CD4-positive, alpha-beta T cell (primary cell): ENCODE measurements at regions of chr6 and their contacts with region 1.

Region 1: DNA sequence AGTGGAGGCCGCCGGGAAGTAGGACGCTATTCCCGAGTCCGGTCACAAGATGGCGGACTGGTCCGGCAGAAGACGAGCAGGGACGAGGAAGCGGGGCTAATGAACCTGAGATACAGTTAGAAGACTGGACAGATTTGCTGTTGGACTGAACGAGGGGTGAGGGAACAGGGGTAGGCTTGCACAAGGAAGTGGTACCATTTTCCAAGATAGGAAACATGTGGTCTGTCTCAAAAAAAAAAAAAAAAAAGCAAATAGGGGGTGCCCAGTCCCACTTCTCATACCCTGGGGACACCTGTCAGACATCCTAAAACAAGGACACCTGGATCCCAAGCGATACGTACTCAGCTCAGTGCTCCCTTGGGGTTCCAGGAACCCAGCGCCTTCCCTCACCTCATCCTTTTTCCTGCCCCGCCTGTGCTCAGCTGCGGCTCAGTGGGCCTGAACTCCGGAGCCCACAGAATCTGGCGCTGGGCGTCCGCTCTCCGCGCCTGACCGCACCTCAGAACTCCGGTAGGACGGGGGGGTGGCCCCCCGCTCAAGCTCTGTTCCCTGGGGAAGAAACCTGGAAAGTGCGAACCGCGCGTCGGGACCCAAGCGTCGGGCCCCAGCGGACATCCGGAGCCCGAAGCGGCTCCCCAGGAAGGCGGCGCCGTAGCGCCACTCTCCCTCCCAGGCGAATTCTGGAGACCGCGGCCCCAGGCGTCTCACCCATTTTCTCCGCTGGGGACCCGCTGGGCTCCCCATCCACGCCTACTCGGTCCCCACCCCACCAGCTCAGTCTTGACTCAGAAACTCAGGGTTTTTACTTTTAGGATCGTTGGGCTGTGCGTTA is at the start of gene LY6G5C:
- DNase-seq: peak in 13 of 14 experiments; percentile 45 to 83 (median 61)
- ATAC-seq: peak; percentile 71
- H3K4me3 ChIP-seq: peak within 1 kb of the TSS; percentile 79
- H3K4me3 Mint-ChIP-seq: peak within 1 kb of the TSS; percentile 87
- H3K27ac ChIP-seq: peak within 1 kb of the TSS in 1 of 2 donors; percentile 44
- H3K27ac Mint-ChIP-seq: peak within 1 kb of the TSS; percentile 35
- H3K4me1 ChIP-seq: peaks cover 21% of the 10 kb centered on the region
- H3K4me1 Mint-ChIP-seq: peaks cover 19% of the 10 kb centered on the region
- H3K27me3 ChIP-seq: no peaks in the 10 kb centered on the region
- H3K27me3 Mint-ChIP-seq: no peaks in the 10 kb centered on the region
- CTCF ChIP-seq: peak; percentile 71
- total RNA-seq, gene LY6G5C: 0.49 to 0.67 TPM

Region 2: GRCh38 chr6:31321820-31322219 is 359.2 kb before region 1 on chr6:
- CTCF ChIA-PET with region 1: no interaction called
- POLR2A ChIA-PET with region 1: no interaction called
- intact Hi-C with region 1: no loop called
- DNase-seq: no peak
- ATAC-seq: no peak
- H3K4me3 ChIP-seq: no peak overlapping the region
- H3K4me3 Mint-ChIP-seq: no peak overlapping the region
- H3K27ac ChIP-seq: no peak overlapping the region
- H3K27ac Mint-ChIP-seq: no peak overlapping the region
- H3K4me1 ChIP-seq: no peaks in the 10 kb centered on the region
- H3K4me1 Mint-ChIP-seq: no peaks in the 10 kb centered on the region
- H3K27me3 ChIP-seq: peaks cover 0 to 3% of the 10 kb centered on the region in 2 experiments
- H3K27me3 Mint-ChIP-seq: peaks cover 37% of the 10 kb centered on the region
- CTCF ChIP-seq: no peak

Region 3: DNA sequence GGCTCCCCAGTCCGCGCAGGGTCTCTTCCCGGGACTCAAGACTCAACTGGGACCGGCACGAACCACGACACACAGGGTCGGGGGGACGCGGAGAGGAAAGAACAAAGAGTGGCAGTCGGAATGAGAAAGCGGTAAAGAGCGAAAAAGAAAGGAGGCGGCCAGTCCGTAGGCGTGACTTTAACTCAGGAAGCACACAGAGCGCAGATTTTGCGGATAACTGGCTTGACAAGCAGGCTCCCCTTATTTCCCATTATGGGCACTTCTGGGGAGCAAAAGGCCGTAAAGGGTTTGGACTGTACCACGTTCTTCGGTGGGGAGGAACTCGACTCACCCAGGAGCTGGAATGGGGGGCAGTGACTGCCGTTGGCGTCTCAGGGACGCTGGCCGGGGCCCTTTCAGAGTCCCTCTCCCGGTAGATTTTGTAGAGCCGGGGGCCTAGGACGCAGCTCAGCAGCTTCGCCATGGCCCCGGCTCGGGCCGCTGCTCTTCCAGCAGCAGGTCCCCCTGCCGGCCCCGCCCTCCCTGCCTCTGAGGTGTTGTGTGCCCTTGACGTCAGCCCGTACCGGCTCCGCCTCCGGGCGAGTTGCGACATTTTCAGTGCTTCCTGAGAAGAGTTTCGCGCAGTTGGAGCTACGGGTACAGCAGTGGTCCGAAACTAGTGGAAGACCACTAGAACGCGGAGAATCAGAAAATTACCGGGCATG is 21.9 kb after region 1 on chr6 and contains the start of gene ABHD16A:
- CTCF ChIA-PET with region 1: interaction called, 10 read pairs
- POLR2A ChIA-PET with region 1: interaction called, 12 read pairs
- intact Hi-C with region 1: no loop called
- DNase-seq: peak; percentile 94 to 99 (median 97)
- ATAC-seq: peak; percentile 91
- H3K4me3 ChIP-seq: peak within 1 kb of the TSS; percentile 67
- H3K4me3 Mint-ChIP-seq: peak within 1 kb of the TSS; percentile 94
- H3K27ac ChIP-seq: peak within 1 kb of the TSS; percentile 95 to 98
- H3K27ac Mint-ChIP-seq: peak within 1 kb of the TSS; percentile 94
- H3K4me1 ChIP-seq: peaks cover 35% of the 10 kb centered on the region
- H3K4me1 Mint-ChIP-seq: peaks cover 33% of the 10 kb centered on the region
- H3K27me3 ChIP-seq: no peaks in the 10 kb centered on the region
- H3K27me3 Mint-ChIP-seq: no peaks in the 10 kb centered on the region
- CTCF ChIP-seq: no peak
- total RNA-seq, gene ABHD16A: 52.3 to 59.3 TPM

Region 4: GRCh38 chr6:31888276-31889258 is 207.5 kb after region 1 on chr6:
- CTCF ChIA-PET with region 1: no interaction called
- POLR2A ChIA-PET with region 1: no interaction called
- intact Hi-C with region 1: loop called in 1 of 2 experiments (anchors 1 kb)
- DNase-seq: peak; percentile 40 to 72 (median 52)
- ATAC-seq: peak; percentile 70
- H3K4me3 ChIP-seq: no peak overlapping the region
- H3K4me3 Mint-ChIP-seq: no peak overlapping the region
- H3K27ac ChIP-seq: no peak overlapping the region
- H3K27ac Mint-ChIP-seq: no peak overlapping the region
- H3K4me1 ChIP-seq: peaks cover 8% of the 10 kb centered on the region
- H3K4me1 Mint-ChIP-seq: no peaks in the 10 kb centered on the region
- H3K27me3 ChIP-seq: no peaks in the 10 kb centered on the region
- H3K27me3 Mint-ChIP-seq: no peaks in the 10 kb centered on the region
- CTCF ChIP-seq: peak; percentile 84

Region 5: DNA sequence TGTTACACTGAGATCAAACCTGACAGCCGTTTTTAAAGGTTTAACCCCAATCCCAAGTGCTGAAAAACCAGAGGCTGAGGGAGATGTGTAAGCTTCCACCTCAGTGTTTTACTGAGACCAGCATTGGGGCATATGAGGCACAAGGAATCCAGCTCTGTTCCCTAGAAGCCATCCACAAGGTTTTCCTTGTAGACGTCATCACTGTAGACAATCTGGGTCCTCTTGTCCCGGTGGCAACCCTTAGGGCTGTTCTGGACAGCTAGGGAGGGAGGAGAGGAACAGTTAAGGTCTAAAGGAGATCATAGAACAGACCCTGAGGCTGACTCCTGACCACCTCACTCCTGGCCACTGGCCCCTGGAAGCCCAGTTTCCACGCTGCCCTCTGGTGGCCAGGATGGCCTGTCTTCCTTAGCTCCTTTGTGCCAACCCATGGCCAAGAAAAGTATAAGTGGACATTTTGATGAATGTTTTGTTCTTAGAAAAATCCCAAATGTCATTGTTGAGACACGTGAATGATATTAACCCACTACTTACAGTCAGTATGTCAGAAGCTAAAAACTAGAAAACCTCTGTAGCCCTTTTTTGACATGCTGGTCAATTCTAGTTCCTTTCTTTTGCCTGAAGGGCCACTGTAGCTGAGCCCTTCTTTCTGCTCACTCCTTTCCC is 271.2 kb after region 1 on chr6:
- CTCF ChIA-PET with region 1: no interaction called
- POLR2A ChIA-PET with region 1: no interaction called
- intact Hi-C with region 1: loop called in 1 of 2 experiments (anchors 5 kb)
- DNase-seq: peak in 7 of 14 experiments; percentile 24 to 62 (median 44)
- ATAC-seq: no peak
- H3K4me3 ChIP-seq: no peak overlapping the region
- H3K4me3 Mint-ChIP-seq: no peak overlapping the region
- H3K27ac ChIP-seq: no peak overlapping the region
- H3K27ac Mint-ChIP-seq: no peak overlapping the region
- H3K4me1 ChIP-seq: peaks cover 4% of the 10 kb centered on the region
- H3K4me1 Mint-ChIP-seq: peaks cover 4% of the 10 kb centered on the region
- H3K27me3 ChIP-seq: no peaks in the 10 kb centered on the region
- H3K27me3 Mint-ChIP-seq: no peaks in the 10 kb centered on the region
- CTCF ChIP-seq: peak; percentile 62

Region 6: DNA sequence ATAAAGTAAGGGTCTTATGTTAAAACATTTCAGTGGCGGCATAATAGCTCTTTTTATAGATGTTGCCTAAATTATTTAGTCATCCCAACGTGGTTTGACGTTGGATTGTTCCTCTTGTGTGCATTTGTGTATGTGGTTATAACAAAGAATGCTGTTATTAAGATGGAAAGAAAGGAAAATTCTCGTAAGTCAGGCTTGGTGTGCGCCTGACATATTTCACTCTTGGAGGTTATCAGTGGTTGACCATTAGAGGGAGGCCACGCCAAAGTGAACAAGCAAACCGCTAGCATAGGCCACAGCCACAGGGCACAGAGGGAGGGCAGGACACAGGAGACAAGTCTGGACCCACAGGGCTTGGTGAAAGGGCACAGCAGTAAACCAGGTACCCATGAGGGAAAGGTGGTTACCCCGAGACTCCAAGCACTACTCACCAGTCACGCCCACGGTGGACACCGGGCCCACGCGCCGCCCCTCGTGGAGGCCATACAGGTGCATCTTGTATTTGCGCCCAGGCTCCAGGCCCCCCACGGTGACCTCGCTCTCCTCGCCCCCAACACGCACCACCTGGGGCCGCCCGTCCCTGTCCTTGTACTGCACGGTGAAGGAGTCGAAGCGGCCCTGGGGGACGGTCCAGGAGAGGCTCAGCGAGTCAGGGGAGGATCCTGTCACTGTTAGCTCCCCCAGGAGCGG is 380.1 kb after region 1 on chr6:
- CTCF ChIA-PET with region 1: no interaction called
- POLR2A ChIA-PET with region 1: no interaction called
- intact Hi-C with region 1: no loop called
- DNase-seq: no peak
- ATAC-seq: no peak
- H3K4me3 ChIP-seq: no peak overlapping the region
- H3K4me3 Mint-ChIP-seq: no peak overlapping the region
- H3K27ac ChIP-seq: no peak overlapping the region
- H3K27ac Mint-ChIP-seq: no peak overlapping the region
- H3K4me1 ChIP-seq: no peaks in the 10 kb centered on the region
- H3K4me1 Mint-ChIP-seq: no peaks in the 10 kb centered on the region
- H3K27me3 ChIP-seq: no peaks in the 10 kb centered on the region
- H3K27me3 Mint-ChIP-seq: no peaks in the 10 kb centered on the region
- CTCF ChIP-seq: no peak